ENCODE measurements at regions of chr4 and their contacts with region 1.

Region 1: GRCh38 chr4:24853142-24853541 is 57.8 kb downstream of the SOD3 start:
- DNase-seq: no peak
- ATAC-seq: no peak
- H3K4me3 ChIP-seq: no peak overlapping the region
- H3K27ac ChIP-seq: no peak overlapping the region
- H3K4me1 ChIP-seq: no peaks in the 10 kb centered on the region
- H3K27me3 ChIP-seq: no peaks in the 10 kb centered on the region
- CTCF ChIP-seq: no peak

Region 2: GRCh38 chr4:23775694-23776093 is 1077.4 kb before region 1 on chr4:
- CTCF ChIA-PET with region 1: no interaction called
- POLR2A ChIA-PET with region 1: no interaction called
- in situ Hi-C with region 1: no loop called
- intact Hi-C with region 1: no loop called
- DNase-seq: no peak
- ATAC-seq: no peak
- H3K4me3 ChIP-seq: no peak overlapping the region
- H3K27ac ChIP-seq: no peak overlapping the region
- H3K4me1 ChIP-seq: no peaks in the 10 kb centered on the region
- H3K27me3 ChIP-seq: no peaks in the 10 kb centered on the region
- CTCF ChIP-seq: no peak

Region 3: GRCh38 chr4:24799544-24800324 is 53.4 kb before region 1 on chr4:
- CTCF ChIA-PET with region 1: no interaction called
- POLR2A ChIA-PET with region 1: no interaction called
- in situ Hi-C with region 1: no loop called
- intact Hi-C with region 1: no loop called
- DNase-seq: no peak
- ATAC-seq: no peak
- H3K4me3 ChIP-seq: no peak overlapping the region
- H3K27ac ChIP-seq: no peak overlapping the region
- H3K4me1 ChIP-seq: no peaks in the 10 kb centered on the region
- H3K27me3 ChIP-seq: no peaks in the 10 kb centered on the region
- CTCF ChIP-seq: no peak

Region 4: DNA sequence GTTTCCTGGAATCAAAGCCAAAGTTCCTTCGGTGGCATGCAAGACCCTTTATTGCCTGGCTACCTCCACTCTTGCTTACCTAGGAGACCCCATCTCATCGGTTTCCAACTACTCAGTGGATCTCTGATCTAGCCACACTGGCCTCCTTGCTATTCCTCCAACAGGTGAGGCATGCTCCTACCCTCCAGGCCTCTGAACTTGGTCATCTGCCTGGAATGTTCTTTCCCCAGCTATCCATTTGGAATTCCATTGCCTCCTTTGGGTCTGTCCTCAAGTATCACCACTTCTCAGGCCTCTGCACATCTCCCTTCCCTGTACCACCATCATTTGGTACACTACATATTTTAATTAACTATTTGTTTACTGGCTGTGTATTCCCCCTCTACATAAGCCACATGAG is 166.3 kb after region 1 on chr4:
- CTCF ChIA-PET with region 1: no interaction called
- POLR2A ChIA-PET with region 1: interaction called, 10 read pairs
- in situ Hi-C with region 1: no loop called
- intact Hi-C with region 1: no loop called
- DNase-seq: no peak
- ATAC-seq: no peak
- H3K4me3 ChIP-seq: no peak overlapping the region
- H3K27ac ChIP-seq: no peak overlapping the region
- H3K4me1 ChIP-seq: no peaks in the 10 kb centered on the region
- H3K27me3 ChIP-seq: peaks cover 3% of the 10 kb centered on the region; the same call in 1 of the 2 replicates
- CTCF ChIP-seq: no peak

Region 5: DNA sequence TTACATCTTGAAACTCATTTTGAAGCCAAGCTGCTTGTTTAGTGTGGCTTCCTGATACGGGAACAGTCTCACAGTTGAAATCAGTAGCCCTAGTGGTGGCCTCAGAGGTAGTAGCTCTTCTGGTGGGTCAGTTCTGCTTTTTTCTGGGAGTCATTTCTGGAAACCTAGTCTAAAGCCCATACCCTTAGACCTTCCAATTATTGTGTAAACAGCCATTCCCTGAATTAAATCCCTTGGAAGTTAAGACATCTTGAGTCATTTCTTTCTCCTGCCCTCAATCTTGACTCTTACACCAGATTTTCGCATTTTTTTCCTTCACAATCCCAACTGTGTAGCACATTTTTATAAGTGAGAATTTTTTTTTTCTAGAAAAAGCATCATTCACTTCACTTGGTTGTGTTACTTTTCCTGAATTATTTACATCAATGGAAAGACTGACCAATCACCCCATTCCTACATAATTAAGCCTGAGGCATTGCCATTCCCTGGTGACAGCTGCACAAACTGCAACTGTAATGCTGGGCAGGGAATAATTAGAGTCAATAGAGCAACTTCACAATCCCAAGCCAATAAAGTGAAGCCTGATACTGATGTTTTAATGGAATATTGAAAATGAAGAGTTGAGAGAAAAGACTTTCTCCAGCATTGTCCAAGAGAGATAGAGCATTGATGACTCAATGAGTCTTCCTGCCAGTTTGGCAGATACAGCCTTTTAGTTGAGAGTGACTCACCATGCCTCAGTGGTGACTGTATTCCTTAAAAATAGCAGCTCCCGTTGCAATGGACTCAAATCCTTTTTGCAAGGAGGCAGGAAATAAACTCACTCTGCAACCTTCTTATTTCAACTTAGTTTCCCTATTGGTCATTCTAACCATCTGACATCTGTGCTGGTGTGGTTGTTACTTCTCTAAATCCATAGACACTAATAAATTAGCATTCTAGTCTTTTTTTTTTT is 320.1 kb after region 1 on chr4:
- CTCF ChIA-PET with region 1: no interaction called
- POLR2A ChIA-PET with region 1: no interaction called
- in situ Hi-C with region 1: no loop called
- intact Hi-C with region 1: no loop called
- DNase-seq: peak; percentile 89
- ATAC-seq: peak; percentile 93
- H3K4me3 ChIP-seq: no peak overlapping the region
- H3K27ac ChIP-seq: peak overlapping the region; percentile 7; the same call in 1 of the 2 replicates
- H3K4me1 ChIP-seq: peaks cover 3% of the 10 kb centered on the region; the same call in 1 of the 2 replicates
- H3K27me3 ChIP-seq: no peaks in the 10 kb centered on the region
- CTCF ChIP-seq: no peak